ENCODE measurements at regions of chrX and their contacts with region 1.

Region 1: DNA sequence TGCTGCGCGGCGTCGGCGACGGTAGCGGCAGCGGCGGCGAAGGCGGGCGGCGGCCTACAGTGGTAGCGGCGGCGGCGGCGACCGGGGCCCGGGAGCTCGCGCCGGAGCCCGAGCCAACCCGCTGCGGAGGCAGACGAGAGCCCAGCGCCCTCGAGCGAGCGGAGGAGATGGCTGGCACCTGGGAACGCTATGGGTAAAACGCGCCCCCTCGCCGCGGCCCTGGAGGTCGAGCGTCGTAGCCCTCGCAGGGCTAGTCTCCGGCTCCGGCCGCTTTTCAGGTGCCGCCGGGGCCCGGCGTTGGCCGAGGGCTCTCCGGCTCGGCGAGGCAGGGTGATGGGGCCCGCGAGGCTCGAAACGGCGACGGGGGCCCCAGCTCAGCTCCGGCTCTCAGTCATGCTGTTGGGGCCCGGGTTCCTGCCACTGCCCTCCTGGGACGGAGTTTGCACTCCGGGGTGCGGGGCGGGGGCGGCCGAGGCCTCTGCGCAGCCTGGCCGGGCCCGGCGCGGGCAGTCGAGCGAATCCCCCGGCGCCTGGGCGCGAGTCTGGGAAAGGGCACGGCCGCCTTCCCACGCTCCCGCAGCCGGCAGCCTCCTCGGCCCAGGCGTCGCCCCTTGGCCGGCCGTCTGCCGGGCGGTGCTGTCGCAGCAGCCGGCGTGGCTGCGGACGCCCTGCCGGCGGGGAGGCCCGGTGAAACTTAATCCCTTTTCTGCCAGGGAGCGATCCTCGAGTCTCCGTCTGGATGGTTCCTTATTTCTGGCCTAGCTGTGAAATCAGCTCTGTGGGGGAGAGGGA is 768 bp downstream of the MID2 start:
- DNase-seq: peak in 8 of 9 donors; percentile 9 to 53 (median 46)
- ATAC-seq: peak; percentile 77
- H3K4me3 ChIP-seq: peak overlapping the region; percentile 57
- H3K4me3 Mint-ChIP-seq: peak overlapping the region; percentile 78 to 92 (median 89)
- H3K27ac ChIP-seq: peak overlapping the region; percentile 80
- H3K27ac Mint-ChIP-seq: peak overlapping the region; percentile 44 to 95 (median 92)
- H3K4me1 ChIP-seq: peaks cover 0 to 7% of the 10 kb centered on the region in 2 donors
- H3K4me1 Mint-ChIP-seq: peaks cover 11 to 65% (median 43%) of the 10 kb centered on the region in 7 donors
- H3K27me3 ChIP-seq: no peaks in the 10 kb centered on the region
- H3K27me3 Mint-ChIP-seq: peaks cover 0 to 20% (median 0%) of the 10 kb centered on the region in 5 donors

Region 2: DNA sequence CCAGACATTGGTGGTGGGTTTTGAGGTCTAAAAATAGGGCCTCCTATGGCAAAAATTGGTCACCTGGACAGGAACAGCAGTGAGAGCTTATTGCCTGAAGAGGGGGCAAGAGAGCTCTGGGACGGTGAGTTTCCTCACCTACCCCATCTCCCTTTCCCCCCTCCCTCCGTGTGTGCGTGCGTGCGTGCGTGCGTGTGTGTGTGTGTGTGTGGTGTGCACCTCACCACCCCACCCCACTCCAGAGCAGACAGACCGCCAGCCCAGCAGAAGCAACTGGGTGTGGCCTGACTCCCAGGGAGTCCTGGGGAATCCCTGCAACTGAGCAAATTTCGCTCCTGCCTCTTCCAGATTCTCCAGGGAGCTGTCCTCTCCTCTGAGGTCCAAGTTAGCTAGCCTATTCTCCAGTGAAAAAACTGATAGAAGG is 153.5 kb before region 1 on chrX:
- CTCF ChIA-PET with region 1: no interaction called
- POLR2A ChIA-PET with region 1: interaction called, 6 read pairs
- intact Hi-C with region 1: loop called in 1 of 2 experiments (anchors 1 kb)
- DNase-seq: peak; percentile 41 to 93 (median 88)
- ATAC-seq: peak; percentile 69
- H3K4me3 ChIP-seq: peak overlapping the region; percentile 58
- H3K4me3 Mint-ChIP-seq: peak overlapping the region; percentile 65 to 90 (median 84)
- H3K27ac ChIP-seq: peak overlapping the region; percentile 99
- H3K27ac Mint-ChIP-seq: peak overlapping the region; percentile 96 to 100 (median 98)
- H3K4me1 ChIP-seq: peaks cover 34 to 36% of the 10 kb centered on the region in 2 donors
- H3K4me1 Mint-ChIP-seq: peaks cover 14 to 72% (median 44%) of the 10 kb centered on the region in 7 donors
- H3K27me3 ChIP-seq: no peaks in the 10 kb centered on the region
- H3K27me3 Mint-ChIP-seq: no peaks in the 10 kb centered on the region

Region 3: GRCh38 chrX:107741404-107741790 is 85.0 kb before region 1 on chrX:
- CTCF ChIA-PET with region 1: no interaction called
- POLR2A ChIA-PET with region 1: no interaction called
- intact Hi-C with region 1: loop called in 1 of 2 experiments (anchors 1 kb)
- DNase-seq: peak in 1 of 9 donors; percentile 10
- ATAC-seq: no peak
- H3K4me3 ChIP-seq: peak overlapping the region; percentile 45
- H3K4me3 Mint-ChIP-seq: peak overlapping the region; percentile 80 to 96 (median 85)
- H3K27ac ChIP-seq: peak overlapping the region; percentile 72
- H3K27ac Mint-ChIP-seq: peak overlapping the region; percentile 94 to 100 (median 99)
- H3K4me1 ChIP-seq: peaks cover 26 to 45% of the 10 kb centered on the region in 2 donors
- H3K4me1 Mint-ChIP-seq: peaks cover 15 to 70% (median 45%) of the 10 kb centered on the region in 7 donors
- H3K27me3 ChIP-seq: no peaks in the 10 kb centered on the region
- H3K27me3 Mint-ChIP-seq: peaks cover 0 to 7% (median 0%) of the 10 kb centered on the region in 5 donors

Region 4: DNA sequence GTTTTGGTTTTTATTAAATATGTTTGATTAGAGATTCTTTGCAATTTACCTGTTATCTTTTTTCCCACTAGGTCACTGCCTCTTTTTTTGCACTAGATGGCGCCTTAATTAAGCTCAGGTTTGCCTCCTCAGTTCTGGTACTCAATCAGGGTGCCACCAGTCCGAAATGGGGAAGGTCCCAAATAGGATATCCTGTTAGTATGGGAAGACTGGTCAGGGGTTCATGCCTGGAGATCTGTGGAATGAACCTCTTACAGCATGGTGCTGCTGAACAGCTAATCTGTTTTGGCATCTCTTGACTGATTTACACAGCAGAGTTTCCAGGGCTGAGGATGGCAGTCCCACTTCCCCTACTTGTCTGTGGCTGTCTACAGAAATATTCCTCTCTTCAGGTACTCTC is 194.2 kb after region 1 on chrX:
- CTCF ChIA-PET with region 1: no interaction called
- POLR2A ChIA-PET with region 1: no interaction called
- intact Hi-C with region 1: loop called in 1 of 2 experiments (anchors 5 kb)
- DNase-seq: peak in 7 of 9 donors; percentile 10 to 41 (median 29)
- ATAC-seq: no peak
- H3K4me3 ChIP-seq: peak overlapping the region; percentile 24
- H3K4me3 Mint-ChIP-seq: peak overlapping the region; percentile 73 to 95 (median 88)
- H3K27ac ChIP-seq: peak overlapping the region; percentile 82
- H3K27ac Mint-ChIP-seq: peak overlapping the region in 8 of 9 donors; percentile 88 to 97 (median 96)
- H3K4me1 ChIP-seq: peaks cover 26 to 38% of the 10 kb centered on the region in 2 donors
- H3K4me1 Mint-ChIP-seq: peaks cover 21 to 88% (median 79%) of the 10 kb centered on the region in 7 donors
- H3K27me3 ChIP-seq: no peaks in the 10 kb centered on the region
- H3K27me3 Mint-ChIP-seq: no peaks in the 10 kb centered on the region

Region 5: GRCh38 chrX:108199691-108200090 is 373.3 kb after region 1 on chrX:
- CTCF ChIA-PET with region 1: no interaction called
- POLR2A ChIA-PET with region 1: no interaction called
- intact Hi-C with region 1: no loop called
- DNase-seq: no peak
- ATAC-seq: no peak
- H3K4me3 ChIP-seq: no peak overlapping the region
- H3K4me3 Mint-ChIP-seq: no peak overlapping the region
- H3K27ac ChIP-seq: no peak overlapping the region
- H3K27ac Mint-ChIP-seq: no peak overlapping the region
- H3K4me1 ChIP-seq: no peaks in the 10 kb centered on the region
- H3K4me1 Mint-ChIP-seq: no peaks in the 10 kb centered on the region
- H3K27me3 ChIP-seq: no peaks in the 10 kb centered on the region
- H3K27me3 Mint-ChIP-seq: peaks cover 0 to 13% (median 8%) of the 10 kb centered on the region in 5 donors

Region 6: GRCh38 chrX:109536439-109537336 is 1710.3 kb after region 1 on chrX and contains the start of gene NXT2:
- CTCF ChIA-PET with region 1: no interaction called
- POLR2A ChIA-PET with region 1: no interaction called
- intact Hi-C with region 1: loop called in 1 of 2 experiments (anchors 5 kb)
- DNase-seq: peak; percentile 64 to 89 (median 83)
- ATAC-seq: peak; percentile 100
- H3K4me3 ChIP-seq: peak within 1 kb of the TSS; percentile 87
- H3K4me3 Mint-ChIP-seq: peak within 1 kb of the TSS; percentile 79 to 98 (median 95)
- H3K27ac ChIP-seq: peak within 1 kb of the TSS; percentile 87
- H3K27ac Mint-ChIP-seq: peak within 1 kb of the TSS; percentile 92 to 99 (median 98)
- H3K4me1 ChIP-seq: peaks cover 0 to 3% of the 10 kb centered on the region in 2 donors
- H3K4me1 Mint-ChIP-seq: peaks cover 0 to 14% (median 8%) of the 10 kb centered on the region in 7 donors
- H3K27me3 ChIP-seq: no peaks in the 10 kb centered on the region
- H3K27me3 Mint-ChIP-seq: peaks cover 0 to 19% (median 12%) of the 10 kb centered on the region in 5 donors
- total RNA-seq, gene NXT2: 5.7 to 13.5 (median 7.7) TPM

Measured in naive thymus-derived CD4-positive, alpha-beta T cell (primary cell).